Activated CD4-positive, alpha-beta memory T cell treated with anti-CD3 and anti-CD28 coated beads for 36 hours (primary cell): ENCODE measurements at regions of chr14 and their contacts with region 1.

Region 1: DNA sequence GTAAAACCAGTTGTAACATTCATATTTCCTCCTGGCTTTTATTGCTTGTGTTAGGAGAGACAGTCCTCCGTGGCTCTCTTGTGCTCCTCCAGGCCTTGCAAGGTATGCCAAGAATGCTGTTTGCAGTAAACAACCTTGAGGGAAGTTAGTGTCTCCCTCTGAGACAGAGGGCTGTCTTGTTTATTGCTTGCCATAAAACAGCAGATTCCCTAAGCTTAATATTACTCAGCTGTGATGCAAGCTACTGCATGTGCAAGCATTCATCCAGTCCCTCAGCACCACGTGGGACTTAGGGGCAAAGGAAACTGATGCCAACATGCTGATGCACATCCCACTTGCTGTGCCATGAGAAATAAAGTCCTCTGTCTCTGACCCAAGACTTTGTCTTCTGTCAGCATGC is 6.6 kb downstream of the POMT2 start:
- DNase-seq: no peak
- H3K4me3 Mint-ChIP-seq: no peak overlapping the region
- H3K27ac Mint-ChIP-seq: no peak overlapping the region
- H3K4me1 Mint-ChIP-seq: no peaks in the 10 kb centered on the region
- H3K27me3 Mint-ChIP-seq: no peaks in the 10 kb centered on the region

Region 2: GRCh38 chr14:77139540-77140358 is 174.3 kb before region 1 on chr14:
- CTCF ChIA-PET with region 1: interaction called, 26 read pairs
- POLR2A ChIA-PET with region 1: no interaction called
- intact Hi-C with region 1: loop called (anchors 5 kb)
- DNase-seq: peak; percentile 67
- H3K4me3 Mint-ChIP-seq: peak overlapping the region; percentile 25
- H3K27ac Mint-ChIP-seq: no peak overlapping the region
- H3K4me1 Mint-ChIP-seq: peaks cover 23% of the 10 kb centered on the region
- H3K27me3 Mint-ChIP-seq: peaks cover 68% of the 10 kb centered on the region

Region 3: GRCh38 chr14:77278461-77279230 is 35.4 kb before region 1 on chr14:
- CTCF ChIA-PET with region 1: interaction called, 12 read pairs
- POLR2A ChIA-PET with region 1: no interaction called
- intact Hi-C with region 1: no loop called
- DNase-seq: no peak
- H3K4me3 Mint-ChIP-seq: no peak overlapping the region
- H3K27ac Mint-ChIP-seq: no peak overlapping the region
- H3K4me1 Mint-ChIP-seq: no peaks in the 10 kb centered on the region
- H3K27me3 Mint-ChIP-seq: no peaks in the 10 kb centered on the region

Region 4: DNA sequence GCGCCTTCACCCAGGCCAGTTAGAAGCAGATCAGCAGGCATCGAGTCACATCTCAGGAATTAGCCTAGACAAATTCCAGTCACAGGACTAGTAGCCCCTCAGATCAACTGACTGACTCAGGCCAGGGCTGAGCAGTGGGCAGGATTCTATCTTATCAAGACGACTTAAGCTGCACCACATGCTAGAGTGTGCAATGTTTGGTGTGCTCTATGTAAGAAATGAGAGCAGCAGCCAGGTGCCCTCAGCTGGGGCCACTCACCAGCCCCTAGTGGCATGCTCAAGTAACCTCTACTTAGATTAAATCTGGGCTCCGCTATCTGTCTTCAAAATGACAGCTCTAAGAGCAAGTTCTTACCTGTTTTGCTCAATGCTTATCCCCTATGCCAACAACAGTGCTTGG is 23.3 kb before region 1 on chr14:
- CTCF ChIA-PET with region 1: interaction called, 11 read pairs
- POLR2A ChIA-PET with region 1: no interaction called
- intact Hi-C with region 1: no loop called
- DNase-seq: no peak
- H3K4me3 Mint-ChIP-seq: no peak overlapping the region
- H3K27ac Mint-ChIP-seq: no peak overlapping the region
- H3K4me1 Mint-ChIP-seq: no peaks in the 10 kb centered on the region
- H3K27me3 Mint-ChIP-seq: no peaks in the 10 kb centered on the region

Region 5: DNA sequence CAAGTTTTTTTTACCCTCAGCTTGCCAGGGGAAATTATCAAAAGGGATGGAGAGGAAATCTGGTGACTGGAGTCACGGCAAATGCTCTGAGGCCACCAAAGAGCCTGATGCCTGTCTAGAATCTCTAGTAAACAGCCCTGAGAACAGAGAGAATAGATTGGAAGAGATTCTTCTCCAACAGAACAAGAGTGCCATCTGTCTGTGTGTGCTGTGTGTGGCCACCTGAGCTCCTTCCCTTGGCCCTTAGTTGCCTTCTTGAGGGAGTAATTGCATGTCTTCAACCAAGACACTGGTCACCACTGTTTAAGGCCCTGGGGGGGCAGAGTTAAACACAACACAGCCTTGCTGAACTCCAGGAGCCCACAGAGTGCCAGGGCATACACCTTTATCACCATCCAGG is 12.1 kb after region 1 on chr14:
- CTCF ChIA-PET with region 1: interaction called, 18 read pairs
- POLR2A ChIA-PET with region 1: no interaction called
- intact Hi-C with region 1: no loop called
- DNase-seq: no peak
- H3K4me3 Mint-ChIP-seq: no peak overlapping the region
- H3K27ac Mint-ChIP-seq: no peak overlapping the region
- H3K4me1 Mint-ChIP-seq: peaks cover 9% of the 10 kb centered on the region
- H3K27me3 Mint-ChIP-seq: no peaks in the 10 kb centered on the region

Region 6: GRCh38 chr14:77369285-77369684 is 55.2 kb after region 1 on chr14:
- CTCF ChIA-PET with region 1: no interaction called
- POLR2A ChIA-PET with region 1: no interaction called
- intact Hi-C with region 1: no loop called
- DNase-seq: peak; percentile 17
- H3K4me3 Mint-ChIP-seq: no peak overlapping the region
- H3K27ac Mint-ChIP-seq: peak overlapping the region; percentile 63
- H3K4me1 Mint-ChIP-seq: peaks cover 36% of the 10 kb centered on the region
- H3K27me3 Mint-ChIP-seq: no peaks in the 10 kb centered on the region

Region 7: GRCh38 chr14:77485901-77486678 is 172.0 kb after region 1 on chr14:
- CTCF ChIA-PET with region 1: no interaction called
- POLR2A ChIA-PET with region 1: no interaction called
- intact Hi-C with region 1: no loop called
- DNase-seq: no peak
- H3K4me3 Mint-ChIP-seq: no peak overlapping the region
- H3K27ac Mint-ChIP-seq: no peak overlapping the region
- H3K4me1 Mint-ChIP-seq: no peaks in the 10 kb centered on the region
- H3K27me3 Mint-ChIP-seq: no peaks in the 10 kb centered on the region

Region 8: DNA sequence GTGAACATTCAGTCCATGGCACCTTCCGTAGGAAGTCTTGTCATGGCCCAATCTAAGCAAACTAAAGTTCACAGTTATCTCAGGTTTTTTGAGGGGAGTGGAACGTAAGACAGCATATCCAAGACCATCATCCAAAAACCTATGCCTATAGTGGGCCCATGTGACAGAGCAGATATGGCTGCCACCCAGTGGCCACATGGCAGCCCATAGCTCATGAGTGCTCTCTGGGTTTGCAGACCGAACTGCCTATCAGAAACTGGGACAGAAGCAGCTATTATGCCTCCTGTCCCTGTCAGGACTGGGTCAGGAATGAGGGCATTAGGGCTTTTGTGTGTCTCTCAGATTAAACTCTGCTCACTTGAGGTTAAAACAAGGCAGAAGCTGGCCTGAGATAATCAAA is 1359.8 kb after region 1 on chr14:
- CTCF ChIA-PET with region 1: no interaction called
- POLR2A ChIA-PET with region 1: no interaction called
- intact Hi-C with region 1: no loop called
- DNase-seq: no peak
- H3K4me3 Mint-ChIP-seq: no peak overlapping the region
- H3K27ac Mint-ChIP-seq: no peak overlapping the region
- H3K4me1 Mint-ChIP-seq: no peaks in the 10 kb centered on the region
- H3K27me3 Mint-ChIP-seq: no peaks in the 10 kb centered on the region